ENCODE measurements at regions of chr1 and their contacts with region 1.

Region 1: DNA sequence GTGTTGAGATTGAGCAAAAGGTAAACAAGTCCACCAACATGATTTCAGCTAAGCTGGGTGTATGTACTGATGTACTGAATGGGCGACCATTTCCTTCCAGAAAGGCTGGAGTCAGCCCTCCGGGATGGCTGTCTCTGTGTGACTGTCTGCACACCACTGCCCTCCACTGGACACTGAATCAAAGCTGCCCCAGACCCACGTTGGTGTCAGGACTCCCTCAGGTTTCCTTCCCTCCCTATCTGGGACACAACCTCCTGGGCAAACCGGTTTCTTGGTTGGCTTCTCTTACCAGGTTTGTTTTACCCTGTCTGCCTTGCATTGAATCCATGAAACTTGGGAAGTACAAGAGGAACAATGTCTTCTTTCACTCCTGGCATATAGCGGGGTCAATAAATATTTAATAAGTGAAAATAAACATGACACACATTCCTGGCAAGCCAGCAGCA is 5.3 kb upstream of the SRP9 start:
- DNase-seq: peak; percentile 77
- ATAC-seq: peak; percentile 88

Region 2: DNA sequence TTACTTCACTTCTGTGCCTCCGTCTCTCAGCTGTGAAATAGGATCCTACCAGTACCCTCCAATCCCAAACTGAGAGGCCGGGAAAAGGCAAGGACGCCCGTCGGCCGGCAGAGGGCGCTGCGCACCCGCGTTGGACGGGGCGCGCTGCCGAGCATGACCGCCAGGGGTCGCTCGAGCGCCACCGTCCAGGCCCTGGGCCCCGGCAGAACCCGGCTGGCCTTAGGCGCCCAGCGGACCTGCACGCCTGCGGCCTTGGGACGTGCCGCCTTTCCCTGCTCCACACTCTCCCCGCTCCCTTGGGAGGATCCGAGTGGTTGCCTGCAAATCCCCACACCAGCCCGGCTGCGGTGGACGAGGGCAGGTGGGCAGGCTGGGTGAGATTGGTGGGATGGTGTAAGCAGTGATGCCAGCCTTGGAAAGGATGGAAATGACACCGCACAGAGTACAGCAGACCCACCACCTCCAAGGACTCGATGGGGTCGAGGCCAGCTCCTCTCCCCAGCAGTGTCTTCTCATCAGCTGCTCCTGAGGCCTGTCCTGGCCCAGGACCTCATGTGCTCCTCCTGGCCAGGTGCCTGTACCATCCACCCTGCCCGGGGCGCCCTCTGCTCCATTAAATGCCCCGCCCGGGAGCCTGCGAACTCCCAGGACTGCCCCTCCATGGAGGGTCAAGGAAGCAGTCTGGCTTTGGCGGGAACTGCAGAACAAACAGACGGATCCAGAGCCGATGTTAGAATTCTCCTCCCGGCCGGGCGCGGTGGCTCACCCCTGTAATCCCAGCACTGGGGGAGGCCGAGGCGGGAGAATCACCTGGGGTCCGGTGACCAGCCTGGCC is 297.1 kb before region 1 on chr1:
- intact Hi-C with region 1: loop called (anchors 1 kb)
- DNase-seq: peak; percentile 91
- ATAC-seq: peak; percentile 90

Region 3: GRCh38 chr1:225554216-225554812 is 218.0 kb before region 1 on chr1:
- intact Hi-C with region 1: loop called (anchors 2 kb)
- DNase-seq: no peak
- ATAC-seq: no peak

Measured in Right ventricle myocardium inferior (tissue), 1 donor.